GM12878 (cell line): ENCODE measurements at regions of chr5 and their contacts with region 1.

Region 1: DNA sequence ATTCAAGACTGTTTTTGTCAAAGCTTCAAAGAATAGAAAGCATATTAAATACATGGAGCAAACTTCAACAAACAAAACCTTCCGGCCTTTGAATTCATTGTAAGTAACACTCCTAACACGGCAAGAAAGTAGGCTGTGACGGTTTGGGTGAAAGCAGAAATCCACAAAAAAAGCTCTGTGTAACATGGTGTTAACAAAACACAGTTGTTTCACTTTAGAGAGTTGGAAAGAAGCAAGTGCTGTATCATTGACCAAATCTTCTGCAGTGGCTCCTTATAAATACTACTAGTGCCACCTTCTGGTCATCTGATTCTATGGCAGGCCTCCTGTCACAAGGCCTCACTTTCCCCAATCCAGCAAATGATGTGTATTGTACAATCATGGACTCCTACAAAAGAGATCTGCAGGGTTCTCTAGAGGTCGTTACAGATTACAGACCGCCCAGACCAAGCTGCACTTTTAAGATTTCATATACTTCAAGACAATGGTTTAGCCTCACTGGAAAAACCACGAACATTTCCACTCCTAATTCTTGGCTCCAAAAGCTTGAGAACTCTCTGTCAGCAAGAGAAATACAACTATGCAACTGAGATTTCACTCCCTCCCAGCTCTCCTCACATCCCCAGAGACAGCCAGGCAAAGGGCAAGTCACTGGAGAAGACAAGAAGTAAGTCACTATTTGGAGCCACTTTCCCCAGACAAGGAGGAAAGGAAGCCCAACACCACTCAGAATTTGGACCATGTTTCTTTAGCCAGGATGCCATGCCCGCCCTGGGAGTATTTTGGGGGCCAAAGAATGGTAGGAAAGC is 196.2 kb downstream of the DTWD2 start:
- DNase-seq: peak; percentile 36
- ATAC-seq: peak; percentile 97
- H3K4me3 ChIP-seq: no peak overlapping the region
- H3K27ac ChIP-seq: no peak overlapping the region
- H3K4me1 ChIP-seq: no peaks in the 10 kb centered on the region
- H3K27me3 ChIP-seq: no peaks in the 10 kb centered on the region
- CTCF ChIP-seq: peak; percentile 78 to 88 (median 84)
- EP300 ChIP-seq: no peak
- POLR2A ChIP-seq: no peak
- RAD21 ChIP-seq: peak; percentile 90

Region 2: DNA sequence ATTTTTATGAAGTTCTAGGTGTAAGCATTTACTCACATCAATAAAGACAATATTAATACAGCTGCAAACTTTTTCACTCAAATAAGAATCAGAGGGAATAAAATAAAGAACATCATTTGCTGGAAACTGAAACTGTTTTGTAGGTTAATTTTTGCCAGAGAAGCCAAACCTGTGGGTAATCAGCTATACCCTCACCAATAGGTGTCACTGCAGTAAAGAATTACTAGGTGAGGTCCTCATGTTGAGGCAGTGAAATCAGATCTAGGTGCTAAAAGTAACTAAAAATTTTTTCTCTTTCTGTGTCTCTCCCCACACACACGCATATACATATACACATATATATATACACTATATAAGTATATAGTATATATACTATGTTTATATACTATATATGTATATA is 1201.2 kb before region 1 on chr5:
- CTCF ChIA-PET with region 1: interaction called, 5 read pairs
- POLR2A ChIA-PET with region 1: no interaction called
- RAD21 ChIA-PET with region 1: no interaction called
- SMC1A ChIA-PET with region 1: no interaction called
- in situ Hi-C with region 1: loop called (anchors 25 kb)
- intact Hi-C with region 1: loop called (anchors 5 kb)
- DNase-seq: no peak
- ATAC-seq: peak; percentile 74
- H3K4me3 ChIP-seq: no peak overlapping the region
- H3K27ac ChIP-seq: no peak overlapping the region
- H3K4me1 ChIP-seq: no peaks in the 10 kb centered on the region
- H3K27me3 ChIP-seq: no peaks in the 10 kb centered on the region
- CTCF ChIP-seq: peak; percentile 31 to 40 (median 39); a peak in 4 of 6 replicates
- EP300 ChIP-seq: no peak
- POLR2A ChIP-seq: no peak
- RAD21 ChIP-seq: peak; percentile 48

Region 3: DNA sequence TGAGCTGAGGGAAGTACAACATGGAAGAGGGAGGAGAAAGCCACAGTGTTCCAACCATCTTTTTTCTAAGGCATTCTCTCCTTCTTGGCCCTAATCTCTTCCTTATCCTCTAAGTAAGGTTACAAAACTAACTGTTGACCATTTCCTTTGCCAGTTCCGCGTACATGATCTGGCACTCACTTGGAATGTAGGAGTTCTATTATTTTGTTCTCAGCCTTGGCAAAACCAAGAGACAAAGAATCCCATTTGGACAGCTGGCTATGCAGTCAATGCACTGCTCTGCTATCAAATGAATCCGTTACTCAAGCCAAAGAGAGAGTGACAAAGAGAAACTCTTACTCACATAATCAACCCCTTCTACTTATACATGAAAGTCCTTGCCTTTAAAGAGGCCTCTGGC is 214.0 kb before region 1 on chr5:
- CTCF ChIA-PET with region 1: no interaction called
- POLR2A ChIA-PET with region 1: no interaction called
- RAD21 ChIA-PET with region 1: no interaction called
- SMC1A ChIA-PET with region 1: no interaction called
- in situ Hi-C with region 1: no loop called
- intact Hi-C with region 1: no loop called
- DNase-seq: no peak
- ATAC-seq: no peak
- H3K4me3 ChIP-seq: no peak overlapping the region
- H3K27ac ChIP-seq: no peak overlapping the region
- H3K4me1 ChIP-seq: no peaks in the 10 kb centered on the region
- H3K27me3 ChIP-seq: no peaks in the 10 kb centered on the region
- CTCF ChIP-seq: no peak
- EP300 ChIP-seq: no peak
- POLR2A ChIP-seq: no peak
- RAD21 ChIP-seq: no peak

Region 4: DNA sequence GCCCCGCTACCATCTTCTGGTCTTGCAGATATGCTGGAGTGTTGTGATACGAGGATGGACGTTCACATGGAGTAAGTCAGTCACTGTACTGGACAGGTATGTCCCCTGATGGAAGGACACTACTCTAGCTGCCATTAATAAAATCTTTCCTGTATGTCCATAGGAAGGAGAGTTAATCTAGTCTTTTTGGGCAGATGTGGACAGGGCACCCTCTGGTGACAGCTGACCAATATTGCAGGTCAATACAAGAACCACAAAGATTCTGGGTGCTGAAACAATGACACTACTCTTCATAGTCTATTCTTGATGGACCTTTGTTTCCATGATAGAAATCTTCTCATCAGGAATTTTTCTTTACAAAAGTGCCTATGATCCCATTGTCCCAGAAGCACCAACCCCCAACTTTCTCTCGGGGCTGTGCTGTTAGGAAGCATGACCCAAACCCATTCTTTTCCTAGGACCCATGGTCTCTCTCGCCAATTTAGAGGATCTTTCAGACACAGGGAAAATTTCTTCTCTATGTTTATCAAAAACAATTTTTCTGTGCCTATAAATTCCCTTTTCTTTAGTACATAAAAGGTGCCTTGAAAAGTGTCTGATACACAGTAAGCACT is 180.7 kb before region 1 on chr5:
- CTCF ChIA-PET with region 1: interaction called, 3 read pairs
- POLR2A ChIA-PET with region 1: no interaction called
- RAD21 ChIA-PET with region 1: interaction called, 3 read pairs
- SMC1A ChIA-PET with region 1: interaction called, 8 read pairs
- in situ Hi-C with region 1: no loop called
- intact Hi-C with region 1: loop called (anchors 2 kb)
- DNase-seq: no peak
- ATAC-seq: peak; percentile 60
- H3K4me3 ChIP-seq: no peak overlapping the region
- H3K27ac ChIP-seq: no peak overlapping the region
- H3K4me1 ChIP-seq: no peaks in the 10 kb centered on the region
- H3K27me3 ChIP-seq: no peaks in the 10 kb centered on the region
- CTCF ChIP-seq: peak; percentile 54 to 58 (median 57)
- EP300 ChIP-seq: no peak
- POLR2A ChIP-seq: no peak
- RAD21 ChIP-seq: peak; percentile 74

Region 5: DNA sequence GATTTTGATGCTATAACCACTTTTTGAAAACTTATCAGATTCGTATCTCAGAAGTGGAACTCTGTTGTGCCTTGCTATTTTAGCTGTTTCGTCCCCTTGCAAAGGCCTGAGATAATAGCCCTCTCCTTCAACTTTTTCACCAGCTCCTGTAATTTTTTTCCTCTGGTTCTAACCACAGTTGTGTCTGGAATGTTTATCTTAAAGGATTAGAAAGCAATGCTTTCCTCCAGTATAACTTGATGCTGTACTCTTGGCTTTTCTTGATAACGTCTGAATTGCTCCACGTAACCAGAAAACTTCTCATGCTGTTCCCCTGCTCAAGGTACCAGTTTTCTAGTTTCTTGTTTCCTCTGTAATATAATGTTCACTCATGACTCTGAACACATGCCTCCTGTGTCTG is 13.2 kb before region 1 on chr5:
- CTCF ChIA-PET with region 1: interaction called, 19 read pairs
- POLR2A ChIA-PET with region 1: no interaction called
- RAD21 ChIA-PET with region 1: no interaction called
- SMC1A ChIA-PET with region 1: interaction called, 11 read pairs
- in situ Hi-C with region 1: no loop called
- intact Hi-C with region 1: no loop called
- DNase-seq: no peak
- ATAC-seq: no peak
- H3K4me3 ChIP-seq: no peak overlapping the region
- H3K27ac ChIP-seq: no peak overlapping the region
- H3K4me1 ChIP-seq: no peaks in the 10 kb centered on the region
- H3K27me3 ChIP-seq: no peaks in the 10 kb centered on the region; a peak in 1 of 4 replicates
- CTCF ChIP-seq: no peak
- EP300 ChIP-seq: no peak
- POLR2A ChIP-seq: no peak
- RAD21 ChIP-seq: no peak

Region 6: DNA sequence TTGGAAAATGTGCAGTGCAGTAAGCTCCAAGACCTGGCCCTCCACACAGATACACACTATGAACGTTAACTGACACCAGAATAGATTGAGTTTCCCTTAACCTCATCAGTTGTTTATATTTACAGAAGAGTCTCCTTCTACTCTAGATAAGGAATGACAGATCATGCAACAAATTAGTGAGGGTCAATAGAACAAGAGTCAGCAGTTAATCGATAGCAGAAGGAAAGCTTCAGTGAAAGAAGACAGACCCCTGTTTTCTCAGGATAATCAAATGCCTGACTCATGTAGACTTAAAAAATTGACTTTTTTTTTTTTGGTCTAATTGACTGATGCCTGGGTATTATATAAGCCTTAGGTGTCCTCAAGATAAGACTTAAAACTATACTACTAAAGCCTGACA is 16.3 kb after region 1 on chr5:
- CTCF ChIA-PET with region 1: interaction called, 12 read pairs
- POLR2A ChIA-PET with region 1: no interaction called
- RAD21 ChIA-PET with region 1: no interaction called
- SMC1A ChIA-PET with region 1: interaction called, 5 read pairs
- in situ Hi-C with region 1: no loop called
- intact Hi-C with region 1: no loop called
- DNase-seq: no peak
- ATAC-seq: no peak
- H3K4me3 ChIP-seq: no peak overlapping the region
- H3K27ac ChIP-seq: no peak overlapping the region
- H3K4me1 ChIP-seq: no peaks in the 10 kb centered on the region
- H3K27me3 ChIP-seq: no peaks in the 10 kb centered on the region
- CTCF ChIP-seq: no peak
- EP300 ChIP-seq: no peak
- POLR2A ChIP-seq: no peak
- RAD21 ChIP-seq: no peak